B cell (primary cell): ENCODE measurements at regions of chr11 and their contacts with region 1.

Region 1: DNA sequence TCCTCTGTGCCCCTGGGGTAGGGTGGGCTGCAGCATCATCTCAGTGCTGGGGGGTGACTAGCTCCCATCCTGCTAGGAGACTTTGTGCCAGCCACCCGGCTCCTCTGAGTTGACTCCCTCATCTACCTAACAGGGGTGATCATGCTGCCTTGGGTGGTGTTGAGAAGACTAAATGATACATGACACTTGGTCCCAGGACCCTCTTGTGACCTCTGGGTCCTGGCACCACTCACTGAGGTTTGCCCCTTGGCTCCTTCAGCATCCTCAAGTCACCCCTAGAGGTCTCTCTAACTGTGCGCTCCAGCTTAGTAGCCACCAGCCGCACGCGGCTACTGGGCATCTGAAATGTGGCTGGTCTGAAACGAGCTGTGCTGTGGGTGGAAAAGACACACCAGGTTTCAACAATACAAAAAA is 72.1 kb downstream of the LRRC32 start:
- DNase-seq: peak; percentile 67
- ATAC-seq: peak; percentile 86
- H3K4me3 ChIP-seq: no peak overlapping the region
- H3K4me3 Mint-ChIP-seq: no peak overlapping the region
- H3K27ac ChIP-seq: no peak overlapping the region
- H3K27ac Mint-ChIP-seq: no peak overlapping the region
- H3K4me1 ChIP-seq: peaks cover 0 to 7% of the 10 kb centered on the region in 2 donors
- H3K4me1 Mint-ChIP-seq: peaks cover 8% of the 10 kb centered on the region
- H3K27me3 ChIP-seq: peaks cover 0 to 16% (median 2%) of the 10 kb centered on the region in 4 experiments
- H3K27me3 Mint-ChIP-seq: peaks cover 32% of the 10 kb centered on the region
- CTCF ChIP-seq: peak; percentile 70

Region 2: GRCh38 chr11:76626921-76627401 is 28.5 kb after region 1 on chr11:
- CTCF ChIA-PET with region 1: interaction called, 20 read pairs
- POLR2A ChIA-PET with region 1: interaction called, 4 read pairs
- intact Hi-C with region 1: no loop called
- DNase-seq: peak; percentile 93
- ATAC-seq: peak; percentile 63
- H3K4me3 ChIP-seq: peak overlapping the region in 1 of 5 experiments; percentile 30
- H3K4me3 Mint-ChIP-seq: peak overlapping the region; percentile 81
- H3K27ac ChIP-seq: peak overlapping the region in 1 of 2 donors; percentile 63
- H3K27ac Mint-ChIP-seq: peak overlapping the region; percentile 96
- H3K4me1 ChIP-seq: peaks cover 52 to 56% of the 10 kb centered on the region in 2 donors
- H3K4me1 Mint-ChIP-seq: peaks cover 65% of the 10 kb centered on the region
- H3K27me3 ChIP-seq: peaks cover 0 to 19% (median 0%) of the 10 kb centered on the region in 4 experiments
- H3K27me3 Mint-ChIP-seq: peaks cover 27% of the 10 kb centered on the region
- CTCF ChIP-seq: no peak

Region 3: GRCh38 chr11:76656571-76657081 is 58.2 kb after region 1 on chr11:
- CTCF ChIA-PET with region 1: interaction called, 10 read pairs
- POLR2A ChIA-PET with region 1: no interaction called
- intact Hi-C with region 1: no loop called
- DNase-seq: no peak
- ATAC-seq: no peak
- H3K4me3 ChIP-seq: no peak overlapping the region
- H3K4me3 Mint-ChIP-seq: no peak overlapping the region
- H3K27ac ChIP-seq: no peak overlapping the region
- H3K27ac Mint-ChIP-seq: no peak overlapping the region
- H3K4me1 ChIP-seq: peaks cover 21% of the 10 kb centered on the region in 2 donors
- H3K4me1 Mint-ChIP-seq: peaks cover 21% of the 10 kb centered on the region
- H3K27me3 ChIP-seq: peaks cover 0 to 25% (median 4%) of the 10 kb centered on the region in 4 experiments
- H3K27me3 Mint-ChIP-seq: peaks cover 21% of the 10 kb centered on the region
- CTCF ChIP-seq: no peak

Region 4: DNA sequence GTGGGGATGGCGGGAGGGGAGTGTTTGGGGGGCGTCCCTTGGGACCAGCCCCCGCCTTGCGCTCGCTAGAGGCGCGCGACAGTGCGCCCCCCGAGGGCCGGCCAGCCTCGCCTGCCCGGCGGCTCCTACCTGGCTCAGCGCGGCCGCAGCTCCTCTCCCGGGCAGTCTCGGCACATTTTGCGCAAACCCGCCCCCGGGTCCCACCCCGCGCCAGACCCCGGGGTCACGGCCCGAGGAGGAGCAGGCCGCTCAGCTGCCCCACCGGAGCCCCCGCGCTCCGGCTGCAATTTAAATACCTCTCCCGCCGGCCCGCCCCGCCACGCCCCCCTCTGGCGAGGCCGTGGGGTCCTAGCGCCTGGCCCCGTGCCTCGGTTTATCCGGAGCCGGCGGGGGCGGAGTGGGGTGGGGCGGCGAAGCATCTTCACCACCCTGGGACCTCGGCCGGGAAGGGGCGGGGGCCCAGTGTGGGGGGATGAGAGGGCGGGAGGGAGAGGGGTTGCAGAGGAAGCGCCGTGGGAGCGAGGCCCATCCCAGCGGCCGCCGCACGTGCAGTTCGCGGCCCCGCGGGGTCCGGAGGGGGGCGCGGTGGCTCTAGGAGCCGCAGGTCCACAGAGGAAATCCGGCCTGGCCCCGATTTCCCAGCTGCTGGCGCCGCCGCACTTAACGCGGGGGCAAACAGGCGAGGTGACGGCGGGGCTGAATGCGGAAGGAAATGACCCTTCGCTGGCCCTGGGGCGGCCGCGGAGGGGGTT is 72.2 kb after region 1 on chr11 and contains the start of gene LRRC32:
- CTCF ChIA-PET with region 1: interaction called, 224 read pairs
- POLR2A ChIA-PET with region 1: no interaction called
- intact Hi-C with region 1: loop called (anchors 2 kb)
- DNase-seq: peak; percentile 52
- ATAC-seq: no peak
- H3K4me3 ChIP-seq: peak within 1 kb of the TSS in 4 of 5 experiments; percentile 32 to 52 (median 41)
- H3K4me3 Mint-ChIP-seq: peak within 1 kb of the TSS; percentile 84
- H3K27ac ChIP-seq: peak within 1 kb of the TSS in 1 of 2 donors; percentile 15
- H3K27ac Mint-ChIP-seq: peak within 1 kb of the TSS; percentile 41
- H3K4me1 ChIP-seq: peaks cover 88 to 93% of the 10 kb centered on the region in 2 donors
- H3K4me1 Mint-ChIP-seq: peaks cover 87% of the 10 kb centered on the region
- H3K27me3 ChIP-seq: peaks cover 0 to 56% (median 27%) of the 10 kb centered on the region in 4 experiments
- H3K27me3 Mint-ChIP-seq: peaks cover 43% of the 10 kb centered on the region
- CTCF ChIP-seq: no peak
- total RNA-seq, gene LRRC32: 1.0 and 1.4 TPM in 2 replicates

Region 5: GRCh38 chr11:76686261-76687079 is 88.0 kb after region 1 on chr11:
- CTCF ChIA-PET with region 1: interaction called, 224 read pairs
- POLR2A ChIA-PET with region 1: no interaction called
- intact Hi-C with region 1: no loop called
- DNase-seq: peak; percentile 74
- ATAC-seq: peak; percentile 75
- H3K4me3 ChIP-seq: peak overlapping the region in 4 of 5 experiments; percentile 25 to 57 (median 45)
- H3K4me3 Mint-ChIP-seq: peak overlapping the region; percentile 88
- H3K27ac ChIP-seq: peak overlapping the region in 1 of 2 donors; percentile 41
- H3K27ac Mint-ChIP-seq: peak overlapping the region; percentile 80
- H3K4me1 ChIP-seq: peaks cover 21 to 24% of the 10 kb centered on the region in 2 donors
- H3K4me1 Mint-ChIP-seq: peaks cover 30% of the 10 kb centered on the region
- H3K27me3 ChIP-seq: peaks cover 0 to 33% (median 11%) of the 10 kb centered on the region in 4 experiments
- H3K27me3 Mint-ChIP-seq: peaks cover 44% of the 10 kb centered on the region
- CTCF ChIP-seq: no peak